CD4-positive, alpha-beta memory T cell (primary cell): ENCODE measurements at regions of chr16 and their contacts with region 1.

Region 1: GRCh38 chr16:48318630-48319029 is 66.6 kb downstream of the SIAH1 start:
- DNase-seq: peak; percentile 47 to 69 (median 61)
- H3K4me3 ChIP-seq: no peak overlapping the region
- H3K4me3 Mint-ChIP-seq: peak overlapping the region; percentile 56 to 87 (median 77)
- H3K27ac ChIP-seq: no peak overlapping the region
- H3K27ac Mint-ChIP-seq: peak overlapping the region; percentile 65 to 90 (median 85)
- H3K4me1 ChIP-seq: peaks cover 32% of the 10 kb centered on the region
- H3K4me1 Mint-ChIP-seq: peaks cover 19 to 48% (median 30%) of the 10 kb centered on the region in 4 donors
- H3K27me3 ChIP-seq: no peaks in the 10 kb centered on the region
- H3K27me3 Mint-ChIP-seq: no peaks in the 10 kb centered on the region

Region 2: DNA sequence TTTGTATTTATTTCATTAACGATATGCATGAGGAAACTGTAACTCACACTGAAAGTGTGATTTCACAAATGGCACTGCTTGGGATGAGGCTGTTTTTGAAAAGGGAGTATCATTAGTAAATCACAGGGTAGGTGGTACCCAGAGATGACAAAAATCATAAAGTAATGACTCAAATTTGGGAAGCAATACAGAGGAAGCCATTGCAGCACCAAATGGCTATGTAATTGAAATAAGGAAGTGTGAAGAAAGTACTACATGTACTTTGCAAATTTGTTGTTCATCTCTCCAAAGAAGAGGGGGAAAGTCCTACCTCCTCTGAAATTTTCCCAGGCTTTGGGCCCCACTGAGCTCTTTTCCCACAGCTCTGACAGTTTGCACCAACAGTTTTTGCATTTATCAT is 150.6 kb before region 1 on chr16:
- CTCF ChIA-PET with region 1: no interaction called
- POLR2A ChIA-PET with region 1: no interaction called
- intact Hi-C with region 1: no loop called
- DNase-seq: no peak
- H3K4me3 ChIP-seq: no peak overlapping the region
- H3K4me3 Mint-ChIP-seq: no peak overlapping the region
- H3K27ac ChIP-seq: no peak overlapping the region
- H3K27ac Mint-ChIP-seq: no peak overlapping the region
- H3K4me1 ChIP-seq: peaks cover 4% of the 10 kb centered on the region
- H3K4me1 Mint-ChIP-seq: peaks cover 0 to 4% (median 3%) of the 10 kb centered on the region in 4 donors
- H3K27me3 ChIP-seq: no peaks in the 10 kb centered on the region
- H3K27me3 Mint-ChIP-seq: peaks cover 1 to 2% of the 10 kb centered on the region in 2 donors

Region 3: GRCh38 chr16:48244080-48244862 is 74.4 kb before region 1 on chr16 and contains the start of gene LONP2:
- CTCF ChIA-PET with region 1: interaction called, 3 read pairs
- POLR2A ChIA-PET with region 1: no interaction called
- intact Hi-C with region 1: loop called (anchors 2 kb)
- DNase-seq: peak; percentile 91 to 93 (median 92)
- H3K4me3 ChIP-seq: peak within 1 kb of the TSS; percentile 91 to 94
- H3K4me3 Mint-ChIP-seq: peak within 1 kb of the TSS; percentile 88 to 98 (median 94)
- H3K27ac ChIP-seq: peak within 1 kb of the TSS; percentile 70
- H3K27ac Mint-ChIP-seq: peak within 1 kb of the TSS; percentile 86 to 98 (median 95)
- H3K4me1 ChIP-seq: peaks cover 45% of the 10 kb centered on the region
- H3K4me1 Mint-ChIP-seq: peaks cover 28 to 52% (median 43%) of the 10 kb centered on the region in 4 donors
- H3K27me3 ChIP-seq: no peaks in the 10 kb centered on the region
- H3K27me3 Mint-ChIP-seq: no peaks in the 10 kb centered on the region
- total RNA-seq, gene LONP2: 96.2 to 101 TPM

Region 4: GRCh38 chr16:48365581-48366164 is 47.0 kb after region 1 on chr16:
- CTCF ChIA-PET with region 1: no interaction called
- POLR2A ChIA-PET with region 1: interaction called, 4 read pairs
- intact Hi-C with region 1: loop called (anchors 5 kb)
- DNase-seq: peak; percentile 73 to 78 (median 75)
- H3K4me3 ChIP-seq: peak overlapping the region; percentile 82 to 86
- H3K4me3 Mint-ChIP-seq: peak overlapping the region; percentile 85 to 97 (median 94)
- H3K27ac ChIP-seq: peak overlapping the region; percentile 76
- H3K27ac Mint-ChIP-seq: peak overlapping the region; percentile 88 to 99 (median 98)
- H3K4me1 ChIP-seq: peaks cover 22% of the 10 kb centered on the region
- H3K4me1 Mint-ChIP-seq: peaks cover 23 to 34% (median 31%) of the 10 kb centered on the region in 4 donors
- H3K27me3 ChIP-seq: no peaks in the 10 kb centered on the region
- H3K27me3 Mint-ChIP-seq: no peaks in the 10 kb centered on the region